Mammary epithelial cell (primary cell): ENCODE measurements at regions of chr10 and their contacts with region 1.

Region 1: GRCh38 chr10:964321-964987 is 23.8 kb upstream of the GTPBP4 start:
- DNase-seq: no peak
- H3K4me3 ChIP-seq: no peak overlapping the region
- H3K27ac ChIP-seq: no peak overlapping the region
- H3K4me1 ChIP-seq: no peaks in the 10 kb centered on the region
- H3K27me3 ChIP-seq: no peaks in the 10 kb centered on the region
- CTCF ChIP-seq: no peak

Region 2: GRCh38 chr10:921471-922414 is 42.7 kb before region 1 on chr10:
- CTCF ChIA-PET with region 1: no interaction called
- dilution Hi-C with region 1: no loop called
- in situ Hi-C with region 1: no loop called
- intact Hi-C with region 1: no loop called
- DNase-seq: peak; percentile 27
- H3K4me3 ChIP-seq: no peak overlapping the region
- H3K27ac ChIP-seq: no peak overlapping the region
- H3K4me1 ChIP-seq: peaks cover 10% of the 10 kb centered on the region
- H3K27me3 ChIP-seq: no peaks in the 10 kb centered on the region
- CTCF ChIP-seq: no peak

Region 3: DNA sequence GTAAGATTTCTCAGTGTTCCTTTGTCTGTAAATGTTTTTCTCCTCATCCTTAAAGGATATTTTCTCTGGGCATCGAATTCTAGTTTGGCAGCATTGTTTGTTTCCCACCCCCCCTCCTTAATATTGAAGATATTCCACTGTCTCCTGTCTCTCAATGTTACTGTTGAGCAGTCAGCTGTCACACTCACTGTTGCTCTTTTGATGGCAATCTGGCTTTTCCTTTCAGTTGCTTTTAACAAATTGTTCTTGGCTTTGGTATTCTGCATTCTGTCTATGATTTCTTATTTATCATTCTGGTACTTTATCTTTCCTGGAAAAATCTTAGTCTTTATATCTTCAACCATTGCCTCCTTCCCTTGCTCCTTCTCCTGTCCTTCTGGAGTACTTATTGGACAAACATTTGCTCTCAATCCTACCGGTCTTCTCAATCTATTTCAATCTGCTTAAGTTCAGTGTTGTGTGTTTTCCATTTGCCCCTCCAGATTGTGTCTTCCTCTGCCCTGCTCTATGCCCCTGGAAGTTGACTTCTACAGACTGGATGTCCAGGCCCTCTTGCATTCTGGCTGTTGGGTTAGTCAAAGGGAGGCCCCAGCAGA is 14.5 kb after region 1 on chr10:
- CTCF ChIA-PET with region 1: no interaction called
- dilution Hi-C with region 1: no loop called
- in situ Hi-C with region 1: no loop called
- intact Hi-C with region 1: loop called (anchors 2 kb)
- DNase-seq: no peak
- H3K4me3 ChIP-seq: no peak overlapping the region
- H3K27ac ChIP-seq: no peak overlapping the region
- H3K4me1 ChIP-seq: no peaks in the 10 kb centered on the region
- H3K27me3 ChIP-seq: no peaks in the 10 kb centered on the region
- CTCF ChIP-seq: no peak